Activated naive CD4-positive, alpha-beta T cell treated with anti-CD3 and anti-CD28 coated beads for 36 hours (primary cell): ENCODE measurements at regions of chr22 and their contacts with region 1.

Region 1: DNA sequence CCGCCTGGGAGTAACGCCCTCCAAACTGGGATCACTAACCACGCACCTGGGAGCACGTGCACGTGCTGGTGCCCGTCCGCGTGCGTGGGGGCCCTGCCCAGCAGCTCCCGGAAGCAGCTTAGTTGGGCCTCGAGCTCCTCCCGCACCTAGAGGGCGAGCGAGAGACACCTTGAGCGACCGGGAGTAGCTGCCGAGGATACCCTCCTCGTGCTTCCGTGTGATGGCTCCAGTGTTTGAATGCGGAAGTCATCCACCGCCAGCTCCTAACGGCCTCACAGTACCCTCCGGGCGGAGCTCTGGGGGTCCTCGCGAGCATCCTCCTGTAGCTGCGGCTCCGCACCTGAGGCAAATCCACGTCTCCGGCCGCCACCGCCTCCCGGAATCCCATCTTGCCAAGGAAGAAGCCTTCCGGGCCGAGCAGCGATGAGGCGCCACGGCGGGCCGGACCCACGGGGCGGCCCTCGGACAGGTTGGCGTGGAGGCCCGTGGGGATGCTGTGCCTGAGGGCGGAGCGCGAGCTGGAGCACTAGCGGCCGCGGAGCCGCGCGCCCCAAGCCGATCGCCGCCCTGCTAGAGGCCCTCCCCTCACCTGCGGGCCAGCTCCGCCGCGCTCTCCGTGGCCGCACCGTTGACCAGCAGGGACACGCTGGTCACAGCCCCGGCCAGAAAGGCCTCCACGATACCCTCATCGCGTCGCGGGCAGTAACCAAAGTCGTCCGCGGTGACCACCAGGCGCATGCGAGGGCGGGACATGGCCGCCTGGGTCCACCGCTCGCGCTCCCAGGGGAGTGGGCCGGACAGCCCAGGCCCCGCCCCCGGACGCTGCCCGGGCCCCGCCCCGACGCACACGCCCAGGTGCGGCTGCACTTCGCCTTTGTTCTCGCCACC is at the start of gene YDJC:
- DNase-seq: peak; percentile 97
- H3K4me3 Mint-ChIP-seq: peak within 1 kb of the TSS; percentile 86
- H3K27ac Mint-ChIP-seq: peak within 1 kb of the TSS; percentile 92
- H3K4me1 Mint-ChIP-seq: peaks cover 35% of the 10 kb centered on the region
- H3K27me3 Mint-ChIP-seq: no peaks in the 10 kb centered on the region
- total RNA-seq, gene YDJC: 50.3 to 53.2 TPM

Region 2: DNA sequence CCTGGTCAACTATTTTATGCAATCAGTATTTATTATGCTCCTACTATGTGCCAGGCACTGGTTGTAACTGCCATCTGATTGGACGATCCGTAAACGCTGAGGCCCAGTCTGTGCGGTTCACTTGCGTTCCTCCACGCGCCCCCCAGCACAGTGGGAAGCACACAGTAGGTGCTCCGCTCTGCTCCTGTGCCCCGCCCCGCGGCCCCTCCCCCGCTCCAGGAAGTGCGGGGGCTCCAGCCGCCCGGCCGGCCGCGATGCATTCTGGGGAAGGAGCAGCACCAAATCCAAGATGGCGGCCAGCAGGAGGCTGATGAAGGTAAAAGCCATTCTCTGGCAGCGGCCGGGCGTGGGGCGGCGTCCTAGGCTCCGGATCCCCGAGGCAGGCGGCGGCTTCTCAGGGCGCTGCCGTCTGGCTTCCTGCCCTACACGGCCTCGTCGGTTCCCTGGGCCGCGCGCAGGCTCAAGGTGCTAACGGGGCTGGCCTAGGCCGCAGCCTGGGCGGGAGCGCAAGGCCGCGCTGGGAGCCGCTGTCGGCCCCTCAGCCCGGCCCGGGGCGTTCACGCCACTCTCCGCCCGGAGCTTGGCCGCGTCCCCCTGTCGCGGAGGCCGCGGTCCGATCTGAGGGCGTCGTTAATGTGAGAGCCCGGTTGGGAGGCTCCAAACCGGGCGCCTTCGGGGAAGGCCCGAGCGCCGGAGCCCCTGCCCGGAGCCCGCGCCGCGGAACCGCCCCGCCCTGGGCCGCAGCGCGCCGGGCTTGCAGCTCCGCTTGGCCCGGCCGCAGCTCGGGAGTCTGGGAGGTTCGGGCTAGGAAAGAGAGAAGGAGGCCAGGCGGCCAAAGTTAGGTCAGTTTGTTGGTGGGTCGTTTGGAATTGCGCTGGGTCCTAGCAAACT is 61.8 kb before region 1 on chr22 and contains the start of gene UBE2L3:
- CTCF ChIA-PET with region 1: interaction called, 5 read pairs
- intact Hi-C with region 1: loop called (anchors 1 kb)
- DNase-seq: peak; percentile 89
- H3K4me3 Mint-ChIP-seq: peak within 1 kb of the TSS; percentile 93
- H3K27ac Mint-ChIP-seq: peak within 1 kb of the TSS; percentile 91
- H3K4me1 Mint-ChIP-seq: peaks cover 40% of the 10 kb centered on the region
- H3K27me3 Mint-ChIP-seq: no peaks in the 10 kb centered on the region
- total RNA-seq, gene UBE2L3: 49.1 to 50.1 TPM

Region 3: DNA sequence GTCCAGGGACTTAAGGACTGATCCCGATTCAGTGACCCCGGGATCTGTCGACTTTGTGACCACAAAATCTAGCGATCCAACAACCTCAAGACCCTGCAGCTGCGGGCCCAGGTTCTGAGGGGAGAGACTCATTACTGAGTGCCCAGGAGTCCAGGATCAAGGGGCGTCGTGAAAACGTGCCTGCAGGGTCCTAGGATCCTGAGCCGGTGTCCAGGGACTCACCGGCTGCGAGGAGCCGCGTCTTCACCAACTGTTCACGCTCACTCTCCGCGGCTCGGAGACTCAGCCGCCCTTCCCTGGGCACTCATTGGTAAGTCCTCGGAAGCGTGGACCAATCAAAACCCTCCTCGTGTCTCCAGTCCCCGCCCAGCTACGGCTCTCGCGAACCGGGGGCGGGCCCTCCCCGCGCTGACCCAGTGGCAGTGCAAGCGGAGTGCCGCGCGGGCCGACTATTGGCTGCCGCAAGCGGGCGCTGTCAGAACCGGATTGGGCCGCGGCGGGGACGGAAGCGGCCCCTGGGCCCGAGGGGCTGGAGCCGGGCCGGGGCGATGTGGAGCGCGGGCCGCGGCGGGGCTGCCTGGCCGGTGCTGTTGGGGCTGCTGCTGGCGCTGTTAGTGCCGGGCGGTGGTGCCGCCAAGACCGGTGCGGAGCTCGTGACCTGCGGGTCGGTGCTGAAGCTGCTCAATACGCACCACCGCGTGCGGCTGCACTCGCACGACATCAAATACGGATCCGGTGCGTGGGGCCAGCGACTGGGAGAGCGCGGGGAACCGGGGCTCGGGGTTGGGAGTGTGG is 12.5 kb after region 1 on chr22 and contains the start of gene SDF2L1:
- CTCF ChIA-PET with region 1: interaction called, 208 read pairs
- intact Hi-C with region 1: no loop called
- DNase-seq: peak; percentile 99
- H3K4me3 Mint-ChIP-seq: peak within 1 kb of the TSS; percentile 90
- H3K27ac Mint-ChIP-seq: peak within 1 kb of the TSS; percentile 73
- H3K4me1 Mint-ChIP-seq: peaks cover 30% of the 10 kb centered on the region
- H3K27me3 Mint-ChIP-seq: no peaks in the 10 kb centered on the region
- total RNA-seq, gene SDF2L1: 21.7 to 22.3 TPM

Region 4: DNA sequence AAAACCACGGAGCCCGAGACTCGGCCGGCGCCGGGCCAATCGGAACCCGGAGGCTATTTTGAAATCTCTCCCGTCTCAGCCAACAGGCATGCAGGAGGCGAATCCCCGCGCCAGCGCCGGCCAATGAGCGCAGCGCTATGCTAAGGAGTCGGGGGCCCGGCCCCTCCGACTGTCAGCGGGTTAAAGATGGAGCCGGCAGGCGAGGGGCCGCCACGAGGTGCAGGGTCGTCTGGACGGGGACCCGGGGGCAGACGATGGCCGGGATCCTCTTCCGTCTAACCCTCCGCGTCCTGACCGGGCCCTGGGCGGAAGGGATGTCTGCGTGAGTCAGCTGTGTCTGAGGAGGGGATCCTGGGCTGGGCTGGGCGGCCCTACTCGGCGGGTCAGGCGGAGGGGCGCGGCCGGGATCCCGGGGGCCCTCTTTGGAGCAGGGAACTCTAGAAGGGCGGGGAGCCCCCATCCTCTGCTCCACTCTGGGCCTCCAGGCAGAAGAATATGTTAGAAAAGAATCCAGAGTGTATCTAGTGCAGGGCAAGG is 22.6 kb after region 1 on chr22:
- CTCF ChIA-PET with region 1: interaction called, 208 read pairs
- intact Hi-C with region 1: loop called (anchors 1 kb)
- DNase-seq: peak; percentile 94
- H3K4me3 Mint-ChIP-seq: peak overlapping the region; percentile 88
- H3K27ac Mint-ChIP-seq: peak overlapping the region; percentile 75
- H3K4me1 Mint-ChIP-seq: peaks cover 25% of the 10 kb centered on the region
- H3K27me3 Mint-ChIP-seq: no peaks in the 10 kb centered on the region

Region 5: DNA sequence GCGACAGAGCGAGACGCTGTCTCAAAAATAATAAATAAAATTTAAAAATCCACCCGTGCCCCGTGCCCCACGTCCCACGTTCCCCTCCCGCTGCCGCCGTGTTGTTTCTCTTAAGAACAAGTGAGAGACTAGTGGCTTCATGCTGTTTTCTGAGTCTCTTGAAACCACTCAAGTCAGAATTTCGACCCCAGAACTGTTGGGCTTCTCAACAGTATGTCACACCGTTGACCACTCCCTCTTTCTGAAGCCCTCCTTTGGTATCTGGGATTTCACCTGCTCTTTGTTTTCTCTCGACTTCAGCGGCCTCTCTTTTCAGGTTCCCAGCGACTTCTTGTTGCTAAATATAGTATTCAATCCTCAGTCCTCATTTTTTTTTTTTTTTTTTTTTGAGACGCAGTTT is 37.3 kb after region 1 on chr22:
- CTCF ChIA-PET with region 1: interaction called, 3 read pairs
- intact Hi-C with region 1: loop called (anchors 2 kb)
- DNase-seq: no peak
- H3K4me3 Mint-ChIP-seq: peak overlapping the region; percentile 100
- H3K27ac Mint-ChIP-seq: peak overlapping the region; percentile 95
- H3K4me1 Mint-ChIP-seq: peaks cover 28% of the 10 kb centered on the region
- H3K27me3 Mint-ChIP-seq: no peaks in the 10 kb centered on the region

Region 6: DNA sequence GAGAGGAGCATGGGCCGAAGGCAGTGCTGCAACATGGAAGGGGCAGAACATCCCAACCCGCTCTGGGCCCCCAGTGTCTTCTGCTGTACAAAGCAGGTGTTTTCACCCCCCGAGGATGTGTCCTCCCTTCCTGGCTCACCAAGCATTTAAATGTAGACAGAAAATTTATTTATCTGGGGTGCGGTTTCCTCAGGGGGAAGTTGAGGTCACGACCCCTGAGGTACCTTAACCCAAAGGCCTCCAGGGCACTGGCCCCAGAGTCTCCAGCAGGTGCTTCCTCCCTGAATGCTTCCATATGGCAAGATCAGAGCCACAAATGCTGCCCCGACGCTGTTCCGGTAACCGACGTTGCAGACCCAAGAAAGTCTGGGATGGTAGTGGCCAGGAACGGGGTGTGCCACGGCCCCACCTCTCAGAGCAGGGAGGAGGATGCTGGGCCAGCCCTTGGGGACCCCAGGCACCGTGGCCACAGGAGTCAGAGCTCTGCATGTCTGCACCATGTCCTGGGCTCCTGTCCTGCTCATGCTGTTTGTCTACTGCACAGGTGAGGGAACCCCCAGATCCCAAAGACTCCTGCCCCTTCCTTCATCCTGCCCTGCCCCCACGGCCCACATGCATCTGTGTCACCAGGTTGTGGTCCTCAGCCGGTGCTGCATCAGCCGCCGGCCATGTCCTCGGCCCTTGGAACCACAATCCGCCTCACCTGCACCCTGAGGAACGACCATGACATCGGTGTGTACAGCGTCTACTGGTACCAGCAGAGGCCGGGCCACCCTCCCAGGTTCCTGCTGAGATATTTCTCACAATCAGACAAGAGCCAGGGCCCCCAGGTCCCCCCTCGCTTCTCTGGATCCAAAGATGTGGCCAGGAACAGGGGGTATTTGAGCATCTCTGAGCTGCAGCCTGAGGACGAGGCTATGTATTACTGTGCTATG is 615.1 kb after region 1 on chr22 and contains the start of gene VPREB1:
- CTCF ChIA-PET with region 1: no interaction called
- intact Hi-C with region 1: no loop called
- DNase-seq: no peak
- H3K4me3 Mint-ChIP-seq: no peak within 1 kb of the TSS
- H3K27ac Mint-ChIP-seq: no peak within 1 kb of the TSS
- H3K4me1 Mint-ChIP-seq: peaks cover 12% of the 10 kb centered on the region
- H3K27me3 Mint-ChIP-seq: peaks cover 12% of the 10 kb centered on the region
- total RNA-seq, gene VPREB1: not detected